ENCODE measurements at regions of chr10 and their contacts with region 1.

Region 1: GRCh38 chr10:101467286-101467770 is 113.4 kb downstream of the BTRC start:
- DNase-seq: peak; percentile 50
- ATAC-seq: peak; percentile 87
- H3K4me3 Mint-ChIP-seq: no peak overlapping the region
- H3K27ac Mint-ChIP-seq: no peak overlapping the region
- H3K4me1 Mint-ChIP-seq: peaks cover 6% of the 10 kb centered on the region
- H3K27me3 Mint-ChIP-seq: no peaks in the 10 kb centered on the region

Region 2: DNA sequence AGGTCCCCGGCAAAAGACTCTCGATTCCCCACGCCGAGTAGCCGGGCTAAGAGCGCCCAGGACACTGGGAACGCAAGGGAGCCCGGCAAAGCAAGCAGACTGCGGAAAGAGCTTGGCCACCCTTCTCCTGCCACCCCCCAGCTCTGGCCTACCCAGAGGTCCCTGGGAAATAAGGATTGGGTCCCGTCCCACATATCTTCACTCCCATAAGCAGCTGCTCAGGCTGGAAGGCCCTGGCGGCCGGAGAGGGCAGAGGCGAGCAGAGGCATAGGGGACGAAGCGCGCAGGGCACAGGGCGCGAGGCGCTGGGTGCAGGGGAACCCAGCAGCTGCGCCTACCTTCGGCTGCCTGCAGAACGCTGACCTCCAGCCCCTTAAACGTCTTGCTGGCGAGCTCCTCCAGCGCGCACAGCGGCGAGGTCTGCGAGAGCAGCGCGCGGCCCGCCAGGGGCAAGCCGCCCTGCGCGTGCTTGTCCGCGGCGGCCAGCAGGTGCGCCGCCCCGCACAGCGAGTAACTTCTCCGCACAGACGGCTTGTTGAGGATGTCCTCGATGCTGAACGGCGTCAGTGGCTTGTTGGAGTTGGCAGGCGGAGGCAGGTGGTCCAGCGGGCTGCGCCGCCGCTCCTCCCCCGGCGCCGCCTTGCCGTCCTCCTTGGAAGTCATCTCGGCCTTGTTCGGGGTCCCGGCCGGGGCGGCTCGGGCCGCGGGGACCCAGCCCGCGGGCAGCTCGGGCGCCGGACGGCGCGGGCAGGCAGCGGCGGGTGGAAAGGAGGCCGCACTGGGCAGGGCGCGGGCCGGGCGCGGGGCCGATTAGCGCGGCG is 239.0 kb before region 1 on chr10:
- CTCF ChIA-PET with region 1: no interaction called
- DNase-seq: no peak
- ATAC-seq: no peak
- H3K4me3 Mint-ChIP-seq: no peak overlapping the region
- H3K27ac Mint-ChIP-seq: peak overlapping the region; percentile 61
- H3K4me1 Mint-ChIP-seq: peaks cover 17% of the 10 kb centered on the region
- H3K27me3 Mint-ChIP-seq: peaks cover 81% of the 10 kb centered on the region

Region 3: DNA sequence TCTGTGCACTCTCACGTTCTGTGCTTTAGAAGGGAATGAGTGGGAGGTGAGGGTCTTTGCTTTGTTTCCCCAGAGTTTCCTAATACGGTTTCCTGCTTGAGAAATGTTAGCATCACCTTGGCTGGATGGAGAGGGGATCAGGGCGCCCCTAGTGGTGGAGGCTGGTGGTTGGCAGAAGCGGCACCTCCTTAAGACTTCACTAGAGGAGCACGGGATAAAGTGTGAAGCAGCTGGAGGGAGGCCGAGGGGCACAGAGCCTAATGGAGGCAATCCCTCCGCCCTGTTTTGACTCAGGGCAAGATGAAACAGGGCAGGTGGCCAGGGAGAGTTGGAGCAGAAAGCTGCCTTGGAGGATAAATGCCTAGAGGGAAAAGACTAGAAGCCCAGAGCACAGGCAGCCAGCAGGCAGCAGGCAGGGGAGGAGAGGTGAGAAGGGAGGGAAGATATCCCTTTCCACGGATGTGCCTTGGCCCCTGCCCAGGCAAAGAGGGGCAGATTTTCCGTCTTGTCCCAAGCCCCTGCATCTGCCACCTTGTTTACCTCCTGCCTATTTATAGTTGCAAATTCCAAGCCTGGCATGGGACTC is 169.3 kb before region 1 on chr10:
- CTCF ChIA-PET with region 1: interaction called, 12 read pairs
- DNase-seq: peak; percentile 78
- ATAC-seq: peak; percentile 86
- H3K4me3 Mint-ChIP-seq: no peak overlapping the region
- H3K27ac Mint-ChIP-seq: no peak overlapping the region
- H3K4me1 Mint-ChIP-seq: no peaks in the 10 kb centered on the region
- H3K27me3 Mint-ChIP-seq: peaks cover 66% of the 10 kb centered on the region

Region 4: GRCh38 chr10:101441541-101442455 is 25.5 kb before region 1 on chr10:
- CTCF ChIA-PET with region 1: interaction called, 13 read pairs
- DNase-seq: no peak
- ATAC-seq: peak; percentile 76
- H3K4me3 Mint-ChIP-seq: no peak overlapping the region
- H3K27ac Mint-ChIP-seq: no peak overlapping the region
- H3K4me1 Mint-ChIP-seq: peaks cover 3% of the 10 kb centered on the region
- H3K27me3 Mint-ChIP-seq: no peaks in the 10 kb centered on the region

Region 5: GRCh38 chr10:101453791-101454718 is 13.3 kb before region 1 on chr10:
- CTCF ChIA-PET with region 1: interaction called, 13 read pairs
- DNase-seq: peak; percentile 48
- ATAC-seq: peak; percentile 69
- H3K4me3 Mint-ChIP-seq: no peak overlapping the region
- H3K27ac Mint-ChIP-seq: no peak overlapping the region
- H3K4me1 Mint-ChIP-seq: peaks cover 20% of the 10 kb centered on the region
- H3K27me3 Mint-ChIP-seq: peaks cover 31% of the 10 kb centered on the region

Region 6: GRCh38 chr10:101485681-101486554 is 18.6 kb after region 1 on chr10:
- CTCF ChIA-PET with region 1: interaction called, 12 read pairs
- DNase-seq: no peak
- ATAC-seq: no peak
- H3K4me3 Mint-ChIP-seq: no peak overlapping the region
- H3K27ac Mint-ChIP-seq: no peak overlapping the region
- H3K4me1 Mint-ChIP-seq: no peaks in the 10 kb centered on the region
- H3K27me3 Mint-ChIP-seq: no peaks in the 10 kb centered on the region

Region 7: DNA sequence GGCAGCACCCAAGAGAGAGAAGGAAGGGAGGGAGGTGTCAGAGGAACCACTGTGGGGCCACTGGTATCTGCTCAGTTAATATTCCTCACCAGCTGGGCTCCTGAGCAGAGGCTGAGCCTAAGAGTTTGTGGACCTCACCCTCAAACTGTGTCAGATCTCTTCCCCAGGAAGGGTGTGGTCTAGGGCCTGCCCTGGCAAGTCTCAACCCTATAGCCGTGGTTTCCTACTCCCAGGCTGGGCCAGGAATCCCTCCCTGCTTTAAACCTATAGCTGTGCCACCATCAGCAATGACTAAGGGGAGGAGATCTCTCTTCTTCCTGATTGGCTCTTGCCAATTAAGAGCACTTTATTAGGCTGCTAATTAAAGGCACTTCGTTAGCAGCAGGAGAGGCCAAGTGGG is 90.9 kb after region 1 on chr10:
- CTCF ChIA-PET with region 1: no interaction called
- DNase-seq: no peak
- ATAC-seq: peak; percentile 52
- H3K4me3 Mint-ChIP-seq: no peak overlapping the region
- H3K27ac Mint-ChIP-seq: peak overlapping the region; percentile 58
- H3K4me1 Mint-ChIP-seq: peaks cover 19% of the 10 kb centered on the region
- H3K27me3 Mint-ChIP-seq: peaks cover 3% of the 10 kb centered on the region

Region 8: GRCh38 chr10:101938316-101939281 is 471.3 kb after region 1 on chr10:
- CTCF ChIA-PET with region 1: no interaction called
- DNase-seq: no peak
- ATAC-seq: no peak
- H3K4me3 Mint-ChIP-seq: no peak overlapping the region
- H3K27ac Mint-ChIP-seq: no peak overlapping the region
- H3K4me1 Mint-ChIP-seq: peaks cover 5% of the 10 kb centered on the region
- H3K27me3 Mint-ChIP-seq: no peaks in the 10 kb centered on the region

Measured in activated CD8-positive, alpha-beta memory T cell treated with anti-CD3 and anti-CD28 coated beads, Interleukin-2, amount 10 ng/mL, durations not matched to agents 7 days and 5 days (primary cell).